ENCODE measurements at regions of chr1 and their contacts with region 1.

Region 1: DNA sequence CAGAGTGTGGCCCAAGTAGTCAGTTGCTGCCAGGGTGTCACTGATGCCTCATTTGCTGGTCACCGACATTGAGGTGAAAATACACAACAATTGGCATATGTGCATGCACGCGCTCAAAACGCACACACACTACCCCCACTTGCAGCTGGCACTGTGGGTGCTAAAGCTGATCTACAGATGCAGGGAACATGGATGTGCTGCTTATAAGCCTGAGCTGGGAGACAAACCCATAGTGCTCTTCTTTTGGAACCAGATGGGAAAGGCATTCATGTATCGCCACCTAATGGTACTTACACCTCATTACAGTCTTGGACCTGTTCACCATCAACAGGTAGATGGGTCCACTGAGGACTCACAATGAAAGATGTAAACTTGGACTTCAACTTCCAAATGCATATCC is 70.3 kb upstream of the CAMK1G start:
- DNase-seq: no peak
- H3K4me3 ChIP-seq: no peak overlapping the region
- CTCF ChIP-seq: peak; percentile 63

Region 2: DNA sequence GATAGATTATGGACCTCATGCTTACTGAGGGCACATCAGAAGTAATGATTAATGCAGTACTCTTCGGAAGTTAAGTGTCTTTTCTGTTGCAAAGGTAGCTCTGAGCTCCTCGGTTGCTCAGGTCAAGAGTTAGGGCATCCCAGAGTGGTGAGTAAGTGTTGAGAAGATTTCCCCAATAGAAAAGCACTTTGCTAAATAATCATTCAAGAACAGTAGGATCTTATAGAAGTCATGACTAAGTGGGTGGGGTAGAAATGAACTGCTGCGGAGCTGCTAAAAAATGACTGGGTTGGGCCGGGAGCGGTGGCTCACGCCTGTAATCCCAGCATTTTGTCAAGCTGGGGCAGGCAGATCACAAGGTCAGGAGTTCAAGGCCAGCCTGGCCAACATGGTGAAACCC is 578.3 kb before region 1 on chr1:
- CTCF ChIA-PET with region 1: no interaction called
- POLR2A ChIA-PET with region 1: no interaction called
- DNase-seq: no peak
- H3K4me3 ChIP-seq: no peak overlapping the region
- CTCF ChIP-seq: no peak

Region 3: DNA sequence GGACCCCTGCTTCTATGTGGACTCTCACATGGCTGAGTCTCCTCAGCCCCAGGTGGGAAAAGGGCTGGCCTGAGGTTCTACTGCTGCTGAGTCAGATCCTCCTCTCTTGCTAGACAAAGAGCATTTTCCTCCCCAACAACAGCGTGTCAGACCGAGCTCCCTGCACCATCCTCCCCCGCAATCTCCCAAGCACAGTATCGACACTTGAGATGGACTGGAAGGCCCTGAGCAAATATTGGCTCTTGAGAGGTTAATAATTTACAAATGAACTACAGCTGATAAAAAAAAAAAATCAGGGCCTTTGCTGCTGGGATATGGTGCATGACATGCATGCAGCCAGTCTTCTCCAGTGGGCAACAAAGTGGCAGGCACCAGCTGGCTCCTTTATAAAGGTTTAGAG is 14.8 kb after region 1 on chr1:
- CTCF ChIA-PET with region 1: interaction called, 27 read pairs
- POLR2A ChIA-PET with region 1: no interaction called
- DNase-seq: no peak
- H3K4me3 ChIP-seq: no peak overlapping the region
- CTCF ChIP-seq: no peak